CD14-positive monocyte (primary cell): ENCODE measurements at regions of chr12 and their contacts with region 1.

Region 1: GRCh38 chr12:125183187-125184067 is 118.2 kb downstream of the AACS start:
- DNase-seq: peak; percentile 52 to 60 (median 52)
- H3K4me3 ChIP-seq: no peak overlapping the region
- H3K4me3 Mint-ChIP-seq: peak overlapping the region in 1 of 2 donors; percentile 83
- H3K27ac ChIP-seq: no peak overlapping the region
- H3K27ac Mint-ChIP-seq: peak overlapping the region in 1 of 7 donors; percentile 35
- H3K4me1 ChIP-seq: no peaks in the 10 kb centered on the region
- H3K4me1 Mint-ChIP-seq: peaks cover 5% of the 10 kb centered on the region
- H3K27me3 ChIP-seq: peaks cover 40 to 48% of the 10 kb centered on the region in 2 donors
- H3K27me3 Mint-ChIP-seq: peaks cover 46 to 70% (median 50%) of the 10 kb centered on the region in 3 donors
- CTCF ChIP-seq: peak; percentile 95

Region 2: GRCh38 chr12:125402874-125403789 is 219.7 kb after region 1 on chr12:
- intact Hi-C with region 1: loop called (anchors 1 to 2 kb)
- DNase-seq: peak in 2 of 3 donors; percentile 6 to 9
- H3K4me3 ChIP-seq: no peak overlapping the region
- H3K4me3 Mint-ChIP-seq: no peak overlapping the region
- H3K27ac ChIP-seq: no peak overlapping the region
- H3K27ac Mint-ChIP-seq: no peak overlapping the region
- H3K4me1 ChIP-seq: no peaks in the 10 kb centered on the region
- H3K4me1 Mint-ChIP-seq: no peaks in the 10 kb centered on the region
- H3K27me3 ChIP-seq: peaks cover 0 to 3% of the 10 kb centered on the region in 2 donors
- H3K27me3 Mint-ChIP-seq: peaks cover 1 to 3% (median 2%) of the 10 kb centered on the region in 3 donors
- CTCF ChIP-seq: peak; percentile 69

Region 3: GRCh38 chr12:126747530-126748149 is 1564.2 kb after region 1 on chr12:
- intact Hi-C with region 1: loop called in 1 of 2 experiments (anchors 10 kb)
- DNase-seq: peak in 1 of 3 donors; percentile 7
- H3K4me3 ChIP-seq: no peak overlapping the region
- H3K4me3 Mint-ChIP-seq: no peak overlapping the region
- H3K27ac ChIP-seq: no peak overlapping the region
- H3K27ac Mint-ChIP-seq: no peak overlapping the region
- H3K4me1 ChIP-seq: no peaks in the 10 kb centered on the region
- H3K4me1 Mint-ChIP-seq: no peaks in the 10 kb centered on the region
- H3K27me3 ChIP-seq: no peaks in the 10 kb centered on the region
- H3K27me3 Mint-ChIP-seq: peaks cover 0 to 1% (median 0%) of the 10 kb centered on the region in 3 donors
- CTCF ChIP-seq: peak; percentile 96

Region 4: GRCh38 chr12:126874427-126875026 is 1691.1 kb after region 1 on chr12:
- intact Hi-C with region 1: loop called (anchors 5 to 10 kb)
- DNase-seq: peak in 2 of 3 donors; percentile 3 to 24
- H3K4me3 ChIP-seq: no peak overlapping the region
- H3K4me3 Mint-ChIP-seq: no peak overlapping the region
- H3K27ac ChIP-seq: no peak overlapping the region
- H3K27ac Mint-ChIP-seq: no peak overlapping the region
- H3K4me1 ChIP-seq: no peaks in the 10 kb centered on the region
- H3K4me1 Mint-ChIP-seq: no peaks in the 10 kb centered on the region
- H3K27me3 ChIP-seq: no peaks in the 10 kb centered on the region
- H3K27me3 Mint-ChIP-seq: no peaks in the 10 kb centered on the region
- CTCF ChIP-seq: peak; percentile 80